Dorsolateral prefrontal cortex (tissue), 120 donors: ENCODE measurements at regions of chr10 and their contacts with region 1.

Region 1: DNA sequence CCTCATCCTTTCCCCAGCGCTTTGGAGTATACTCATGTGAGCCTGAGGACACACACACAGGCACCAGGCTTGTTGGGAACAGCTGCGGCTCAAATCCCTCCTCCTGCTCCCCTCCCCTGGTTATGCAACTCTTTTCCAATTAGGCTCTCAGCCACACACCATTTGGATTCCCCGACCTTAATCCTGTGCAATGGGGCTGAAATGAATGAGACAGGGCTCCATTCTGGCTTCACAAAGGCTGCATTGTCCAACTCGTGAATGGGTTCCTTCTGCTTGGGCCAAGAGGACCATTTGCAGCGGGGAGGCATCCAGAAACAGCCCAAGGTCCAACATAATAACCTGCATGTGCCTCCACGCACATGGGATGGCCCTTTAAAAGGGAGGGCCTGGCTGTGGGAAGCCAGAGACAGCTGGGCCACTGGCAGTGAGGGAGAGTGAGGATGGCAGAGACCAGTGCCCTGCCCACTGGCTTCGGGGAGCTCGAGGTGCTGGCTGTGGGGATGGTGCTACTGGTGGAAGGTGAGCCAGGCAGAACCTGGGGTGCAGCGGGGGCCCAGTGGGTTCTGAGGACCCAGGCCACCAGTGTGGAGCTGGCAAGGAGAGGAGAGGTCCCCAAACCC is at the start of gene RGR:
- DNase-seq: peak; percentile 70 to 96 (median 91)
- H3K4me3 ChIP-seq: peak within 1 kb of the TSS in 50 of 59 donors; percentile 9 to 58 (median 33)
- H3K27ac ChIP-seq: peak within 1 kb of the TSS in 51 of 59 donors; percentile 3 to 82 (median 63)
- H3K27me3 ChIP-seq: no peaks in the 10 kb centered on the region
- CTCF ChIP-seq: peak in 11 of 56 donors; percentile 5 to 49 (median 18)
- total RNA-seq, gene RGR: 0.57 to 118 (median 14.2) TPM

Region 2: DNA sequence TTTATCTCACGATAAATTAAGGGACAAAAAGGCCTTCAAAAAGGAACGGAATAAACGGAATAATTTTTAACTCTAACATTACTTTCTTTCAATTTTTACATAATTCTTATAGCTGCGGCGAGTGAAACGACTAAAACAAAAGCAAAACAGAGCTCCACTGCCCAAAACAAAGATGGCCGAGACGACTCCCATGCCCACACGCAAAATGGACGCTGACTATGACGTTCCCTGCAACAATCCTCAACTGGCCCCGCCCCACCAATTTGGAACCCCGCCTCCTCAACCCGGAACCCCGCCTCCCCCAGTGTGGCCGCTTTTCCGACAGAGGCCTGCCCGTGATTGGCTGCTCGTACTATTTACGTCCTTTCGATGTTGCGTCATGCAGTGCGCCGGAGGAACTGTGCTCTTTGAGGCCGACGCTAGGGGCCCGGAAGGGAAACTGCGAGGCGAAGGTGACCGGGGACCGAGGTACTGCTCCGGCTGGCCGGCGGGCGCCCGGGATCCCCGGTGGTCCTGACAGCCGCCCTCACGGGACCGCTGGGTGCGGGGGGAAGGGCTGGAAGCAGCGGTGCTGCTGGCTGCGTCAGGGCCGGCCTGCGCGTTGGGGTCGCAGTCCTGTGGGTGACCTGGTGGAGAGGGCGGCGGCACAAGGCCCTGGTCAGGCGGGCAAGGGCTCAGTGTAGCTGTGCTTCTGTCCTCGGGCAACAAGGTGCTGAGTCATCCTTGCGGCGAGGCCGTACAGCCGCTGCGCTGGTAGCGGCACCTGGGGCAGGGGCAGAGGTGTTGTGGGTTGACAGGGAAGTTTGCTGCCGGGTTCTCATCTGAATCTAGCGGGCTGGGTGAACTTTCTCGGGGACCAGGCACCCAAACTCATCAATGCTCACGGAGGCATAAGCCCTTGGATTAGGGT is 105.4 kb before region 1 on chr10 and contains the start of gene GHITM:
- intact Hi-C with region 1: loop called in 1 of 2 experiments (anchors 5 kb)
- DNase-seq: peak; percentile 97 to 99 (median 99)
- H3K4me3 ChIP-seq: peak within 1 kb of the TSS; percentile 73 to 100 (median 99)
- H3K27ac ChIP-seq: peak within 1 kb of the TSS; percentile 55 to 99 (median 93)
- H3K27me3 ChIP-seq: no peaks in the 10 kb centered on the region
- CTCF ChIP-seq: peak in 50 of 56 donors; percentile 15 to 64 (median 48)
- total RNA-seq, gene GHITM: 112 to 296 (median 226) TPM

Region 3: DNA sequence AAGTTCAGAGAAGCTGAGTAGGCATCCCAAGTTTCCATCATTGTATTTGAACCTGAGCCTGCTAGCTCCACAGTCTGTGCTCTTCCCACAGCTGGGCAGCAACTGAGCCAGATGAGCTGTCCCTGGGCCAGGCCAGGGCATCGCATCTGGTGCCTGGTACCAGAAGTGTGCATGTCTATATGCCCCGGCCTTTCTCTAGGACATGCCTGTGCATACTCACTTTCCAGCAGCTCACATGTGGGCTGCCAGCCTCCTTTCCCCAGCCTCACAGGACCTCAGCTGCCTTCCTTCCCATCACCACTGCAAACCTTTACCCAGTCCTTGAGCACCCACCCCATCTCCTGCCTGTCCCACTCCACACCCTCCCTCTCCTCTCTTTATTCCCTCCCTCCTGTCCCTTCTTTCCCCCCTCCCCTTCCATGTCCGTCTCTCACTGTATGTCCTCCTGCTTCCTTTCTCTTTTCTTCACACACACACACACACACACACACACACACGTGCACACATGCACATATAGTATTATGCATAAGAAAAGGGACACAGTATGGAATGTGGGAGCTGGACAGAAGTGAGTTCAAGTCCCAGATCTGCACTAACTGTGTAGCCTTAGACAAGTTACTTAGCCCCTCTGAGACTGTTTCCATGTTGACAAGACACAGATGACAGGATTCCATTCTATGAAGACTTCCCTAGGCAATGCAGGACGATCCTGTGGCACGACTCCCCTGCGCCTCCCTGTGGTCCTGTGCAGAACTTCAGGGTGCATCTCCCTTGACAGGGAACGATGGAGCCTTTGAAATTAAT is 39.5 kb before region 1 on chr10:
- intact Hi-C with region 1: loop called in 1 of 2 experiments (anchors 5 kb)
- DNase-seq: peak; percentile 45 to 84 (median 76)
- H3K4me3 ChIP-seq: no peak overlapping the region
- H3K27ac ChIP-seq: peak overlapping the region in 1 of 59 donors; percentile 3
- H3K27me3 ChIP-seq: no peaks in the 10 kb centered on the region
- CTCF ChIP-seq: peak; percentile 47 to 92 (median 81)

Region 4: DNA sequence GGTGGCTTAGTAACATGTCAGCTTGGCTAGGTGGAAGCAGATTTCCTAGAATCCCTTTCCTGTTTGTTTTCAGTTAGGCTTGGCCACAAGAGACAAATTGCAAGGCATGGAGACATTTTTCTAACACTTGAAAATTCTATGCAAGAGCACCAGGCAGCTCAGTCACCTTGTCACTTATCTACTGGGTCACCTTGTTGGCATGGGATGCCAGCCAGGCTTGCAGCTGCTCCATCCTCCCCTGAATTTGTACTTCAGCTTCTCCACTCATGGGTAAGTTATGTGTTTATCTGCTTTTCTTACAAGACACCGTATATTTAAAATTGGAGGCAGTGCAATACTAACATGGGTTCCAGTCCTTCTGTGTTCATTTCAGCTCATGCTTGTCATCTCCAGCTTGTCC is 43.4 kb after region 1 on chr10:
- intact Hi-C with region 1: no loop called
- DNase-seq: no peak
- H3K4me3 ChIP-seq: no peak overlapping the region
- H3K27ac ChIP-seq: no peak overlapping the region
- H3K27me3 ChIP-seq: no peaks in the 10 kb centered on the region
- CTCF ChIP-seq: no peak

Region 5: GRCh38 chr10:84328418-84329195 is 83.8 kb after region 1 on chr10 and contains the start of gene CCSER2:
- intact Hi-C with region 1: loop called in 1 of 2 experiments (anchors 5 kb)
- DNase-seq: peak; percentile 87 to 99 (median 94)
- H3K4me3 ChIP-seq: peak within 1 kb of the TSS; percentile 62 to 99 (median 86)
- H3K27ac ChIP-seq: peak within 1 kb of the TSS; percentile 62 to 98 (median 92)
- H3K27me3 ChIP-seq: no peaks in the 10 kb centered on the region
- CTCF ChIP-seq: peak in 20 of 56 donors; percentile 1 to 48 (median 26)
- total RNA-seq, gene CCSER2: 103 to 206 (median 150) TPM